HEK293 (cell line): ENCODE measurements at regions of chr10 and their contacts with region 1.

Region 1: GRCh38 chr10:95363303-95363912 is 72.6 kb upstream of the PDLIM1 start:
- H3K4me3 ChIP-seq: no peak overlapping the region
- H3K27ac ChIP-seq: no peak overlapping the region
- H3K4me1 ChIP-seq: no peaks in the 10 kb centered on the region
- CTCF ChIP-seq: peak; percentile 58; the same call in 1 of the 2 replicates

Region 2: DNA sequence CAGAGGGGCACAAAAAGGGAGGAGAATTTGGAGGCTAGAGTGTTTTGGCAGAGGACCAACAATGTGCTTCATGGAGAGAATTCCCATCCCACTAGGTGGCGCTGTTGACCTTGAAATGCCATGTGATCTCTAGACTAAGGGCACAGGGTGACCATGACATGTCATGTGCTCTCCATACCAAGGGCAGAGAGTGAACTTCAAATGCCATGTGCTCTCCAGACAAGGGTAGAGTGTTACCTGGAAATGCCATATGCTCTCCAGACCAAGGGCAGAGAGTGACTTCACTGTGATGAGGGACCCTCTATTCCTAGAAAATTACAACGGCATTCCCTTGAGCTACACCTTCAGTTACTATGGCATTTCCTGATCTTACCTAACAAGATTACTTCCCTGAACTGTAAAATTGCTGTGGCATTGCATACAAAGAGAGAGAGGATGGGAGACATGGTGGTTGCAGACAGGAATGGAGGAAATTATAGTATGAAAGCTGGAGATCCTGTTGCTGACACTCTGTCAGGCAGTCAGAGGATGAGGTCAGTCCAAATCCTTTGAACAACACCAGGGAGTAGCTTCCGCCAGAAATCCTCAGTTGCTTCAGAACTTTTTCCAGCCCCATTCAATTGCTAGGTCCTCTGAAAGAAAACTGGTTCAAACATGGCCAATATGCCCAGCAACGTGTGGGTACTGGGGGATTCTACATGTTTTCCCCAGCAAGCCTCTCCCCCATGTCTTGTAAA is 230.2 kb before region 1 on chr10:
- CTCF ChIA-PET with region 1: interaction called, 10 read pairs
- POLR2A ChIA-PET with region 1: no interaction called
- H3K4me3 ChIP-seq: no peak overlapping the region
- H3K27ac ChIP-seq: no peak overlapping the region
- H3K4me1 ChIP-seq: no peaks in the 10 kb centered on the region
- CTCF ChIP-seq: peak; percentile 81

Region 3: DNA sequence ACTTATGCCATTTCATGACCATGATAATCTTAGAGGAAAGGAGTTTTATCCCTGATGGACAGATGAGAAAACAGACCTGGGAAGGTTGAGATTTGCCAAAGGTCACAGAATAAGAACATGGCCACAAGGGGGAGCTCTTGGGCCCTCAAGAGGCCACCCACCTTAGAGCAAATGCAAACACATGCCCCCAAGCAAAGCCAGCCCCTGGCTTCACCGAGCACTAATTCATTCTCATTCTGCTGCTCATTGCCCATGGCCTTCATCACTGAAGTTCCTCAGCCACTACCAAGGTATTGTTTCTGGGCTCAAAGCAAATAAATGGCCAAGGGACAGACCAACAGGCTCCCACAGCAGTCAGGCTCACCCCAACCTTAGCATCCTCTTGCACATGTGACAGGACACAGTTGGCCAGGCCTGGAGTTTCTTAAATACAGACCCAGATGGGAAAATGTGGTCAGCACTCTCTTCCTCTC is 116.8 kb before region 1 on chr10:
- CTCF ChIA-PET with region 1: interaction called, 271 read pairs
- POLR2A ChIA-PET with region 1: no interaction called
- H3K4me3 ChIP-seq: no peak overlapping the region
- H3K27ac ChIP-seq: no peak overlapping the region
- H3K4me1 ChIP-seq: no peaks in the 10 kb centered on the region
- CTCF ChIP-seq: peak; percentile 69

Region 4: DNA sequence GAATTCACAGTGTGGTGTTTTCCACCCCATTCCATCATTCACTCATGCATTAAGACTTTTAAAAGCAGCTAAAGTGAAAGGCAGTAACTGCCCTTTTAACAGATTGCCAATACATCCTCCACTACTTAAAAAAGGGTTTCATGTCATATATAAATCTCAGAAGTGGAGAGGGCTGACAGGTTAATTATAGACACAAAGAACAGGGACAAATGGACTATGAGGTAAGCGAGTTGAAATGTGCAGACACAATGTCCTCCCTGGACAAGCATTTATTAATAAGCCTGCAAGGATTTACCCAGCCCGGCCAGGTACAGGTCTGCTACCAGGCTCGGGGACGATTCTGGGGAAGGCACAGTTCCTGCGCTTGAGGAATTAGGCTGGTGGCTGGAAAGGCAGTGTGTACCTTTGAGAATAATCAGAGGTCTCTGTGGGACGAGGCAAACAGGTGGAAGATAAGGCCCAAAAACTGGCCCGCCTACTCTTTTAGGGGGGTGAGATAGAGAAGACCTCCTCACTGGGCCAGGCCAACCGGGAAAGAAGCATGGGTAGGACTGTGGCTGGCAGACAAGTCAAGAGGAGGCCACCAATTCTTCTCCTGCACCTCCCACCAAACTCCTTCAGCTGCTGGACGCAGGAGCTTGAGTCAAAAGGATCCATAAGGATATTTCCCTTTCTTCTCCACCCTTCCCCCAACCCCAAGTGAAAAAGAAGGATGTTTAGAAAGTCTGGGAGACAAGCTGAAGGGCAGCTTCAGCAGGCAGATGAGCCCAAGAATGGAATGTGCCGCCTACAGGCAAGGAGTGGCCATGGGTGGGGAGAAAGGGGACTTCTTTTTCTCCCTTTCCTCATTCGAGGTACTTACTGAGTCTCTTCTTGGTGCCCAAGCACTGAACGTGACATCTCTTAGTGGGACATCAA is 74.1 kb before region 1 on chr10:
- CTCF ChIA-PET with region 1: interaction called, 22 read pairs
- POLR2A ChIA-PET with region 1: no interaction called
- H3K4me3 ChIP-seq: peak overlapping the region; percentile 89
- H3K27ac ChIP-seq: peak overlapping the region; percentile 67
- H3K4me1 ChIP-seq: peaks cover 24% of the 10 kb centered on the region
- CTCF ChIP-seq: peak; percentile 58

Region 5: GRCh38 chr10:95300022-95300539 is 63.3 kb before region 1 on chr10:
- CTCF ChIA-PET with region 1: no interaction called
- POLR2A ChIA-PET with region 1: no interaction called
- H3K4me3 ChIP-seq: no peak overlapping the region
- H3K27ac ChIP-seq: no peak overlapping the region
- H3K4me1 ChIP-seq: peaks cover 5% of the 10 kb centered on the region
- CTCF ChIP-seq: no peak

Region 6: GRCh38 chr10:95350219-95350829 is 13.1 kb before region 1 on chr10:
- CTCF ChIA-PET with region 1: interaction called, 19 read pairs
- POLR2A ChIA-PET with region 1: no interaction called
- H3K4me3 ChIP-seq: no peak overlapping the region
- H3K27ac ChIP-seq: no peak overlapping the region
- H3K4me1 ChIP-seq: 0 out of 2 replicates have a peak, but pooled peaks cover 3% of the 10 kb centered on the region
- CTCF ChIP-seq: no peak

Region 7: DNA sequence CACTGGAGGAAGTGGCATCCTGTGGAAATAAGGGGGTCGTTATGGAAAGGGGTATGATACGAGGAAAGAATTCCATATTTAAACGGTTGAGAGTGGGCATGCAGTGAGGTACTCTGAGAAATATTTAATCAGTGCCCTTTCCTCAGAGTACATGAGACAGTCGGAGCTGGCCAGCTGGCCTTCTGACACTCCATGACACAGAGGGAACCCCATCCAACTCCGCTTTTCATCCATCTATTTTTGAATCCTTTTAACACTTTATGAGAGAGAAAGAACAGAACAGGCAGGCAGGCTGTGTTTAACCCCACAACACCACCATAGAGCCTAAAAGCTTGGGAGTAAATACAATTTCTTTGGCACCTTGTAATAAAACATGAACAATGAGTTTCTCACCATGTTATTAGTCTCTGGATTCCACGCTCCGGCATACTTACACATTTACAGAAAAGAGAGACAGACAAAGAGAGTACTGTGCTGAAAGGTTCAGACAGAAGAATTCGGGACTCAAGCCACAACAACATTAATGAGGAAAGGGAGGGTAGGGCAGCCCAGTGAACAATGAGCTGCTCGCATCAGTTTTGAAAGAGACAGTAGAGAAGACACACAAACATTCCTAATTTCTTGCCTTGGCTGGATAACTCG is 51.6 kb after region 1 on chr10:
- CTCF ChIA-PET with region 1: no interaction called
- POLR2A ChIA-PET with region 1: no interaction called
- H3K4me3 ChIP-seq: no peak overlapping the region
- H3K27ac ChIP-seq: no peak overlapping the region
- H3K4me1 ChIP-seq: no peaks in the 10 kb centered on the region
- CTCF ChIP-seq: no peak